Activated CD4-positive, alpha-beta T cell treated with anti-CD3 and anti-CD28 coated beads, Interleukin-2, amount 10 ng/mL, durations not matched to agents 7 days and 5 days (primary cell): ENCODE measurements at regions of chr17 and their contacts with region 1.

Region 1: DNA sequence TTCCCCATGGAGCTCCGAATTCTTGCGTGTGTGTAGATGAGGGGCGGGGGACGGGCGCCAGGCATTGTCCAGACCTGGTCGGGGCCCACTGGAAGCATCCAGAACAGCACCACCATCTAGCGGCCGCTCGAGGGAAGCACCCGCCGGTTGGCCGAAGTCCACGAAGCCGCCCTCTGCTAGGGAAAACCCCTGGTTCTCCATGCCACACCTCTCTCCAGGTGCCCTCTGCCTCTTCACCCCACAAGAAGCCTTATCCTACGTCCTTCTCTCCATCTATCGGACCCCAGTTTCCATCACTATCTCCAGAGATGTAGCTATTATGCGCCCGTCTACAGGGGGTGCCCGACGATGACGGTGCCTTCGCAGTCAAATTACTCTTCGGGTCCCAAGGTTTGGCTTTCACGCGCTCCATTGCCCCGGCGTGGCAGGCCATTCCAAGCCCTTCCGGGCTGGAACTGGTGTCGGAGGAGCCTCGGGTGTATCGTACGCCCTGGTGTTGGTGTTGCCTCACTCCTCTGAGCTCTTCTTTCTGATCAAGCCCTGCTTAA is 617 bp upstream of the SENP3 start:
- DNase-seq: peak; percentile 83
- H3K4me3 Mint-ChIP-seq: peak overlapping the region; percentile 81
- H3K27ac Mint-ChIP-seq: peak overlapping the region; percentile 93
- H3K4me1 Mint-ChIP-seq: peaks cover 60% of the 10 kb centered on the region
- H3K27me3 Mint-ChIP-seq: no peaks in the 10 kb centered on the region

Region 2: GRCh38 chr17:7484919-7485377 is 76.2 kb before region 1 on chr17:
- CTCF ChIA-PET with region 1: interaction called, 10 read pairs
- POLR2A ChIA-PET with region 1: no interaction called
- DNase-seq: no peak
- H3K4me3 Mint-ChIP-seq: peak overlapping the region; percentile 94
- H3K27ac Mint-ChIP-seq: peak overlapping the region; percentile 99
- H3K4me1 Mint-ChIP-seq: peaks cover 72% of the 10 kb centered on the region
- H3K27me3 Mint-ChIP-seq: no peaks in the 10 kb centered on the region

Region 3: GRCh38 chr17:7515911-7516610 is 45.0 kb before region 1 on chr17:
- CTCF ChIA-PET with region 1: interaction called, 38 read pairs
- POLR2A ChIA-PET with region 1: interaction called, 11 read pairs
- DNase-seq: no peak
- H3K4me3 Mint-ChIP-seq: no peak overlapping the region
- H3K27ac Mint-ChIP-seq: no peak overlapping the region
- H3K4me1 Mint-ChIP-seq: peaks cover 4% of the 10 kb centered on the region
- H3K27me3 Mint-ChIP-seq: no peaks in the 10 kb centered on the region

Region 4: GRCh38 chr17:7548585-7549400 is 12.3 kb before region 1 on chr17 and contains the start of gene TNFSF12:
- CTCF ChIA-PET with region 1: interaction called, 38 read pairs
- POLR2A ChIA-PET with region 1: no interaction called
- DNase-seq: peak; percentile 69
- H3K4me3 Mint-ChIP-seq: peak within 1 kb of the TSS; percentile 86
- H3K27ac Mint-ChIP-seq: peak within 1 kb of the TSS; percentile 90
- H3K4me1 Mint-ChIP-seq: peaks cover 55% of the 10 kb centered on the region
- H3K27me3 Mint-ChIP-seq: peaks cover 2% of the 10 kb centered on the region
- total RNA-seq, gene TNFSF12: 79.6 to 82.5 TPM

Region 5: GRCh38 chr17:7583253-7584109 is 22.4 kb after region 1 on chr17 and contains the start of gene MPDU1:
- CTCF ChIA-PET with region 1: interaction called, 14 read pairs
- POLR2A ChIA-PET with region 1: no interaction called
- DNase-seq: peak; percentile 95
- H3K4me3 Mint-ChIP-seq: peak within 1 kb of the TSS; percentile 92
- H3K27ac Mint-ChIP-seq: peak within 1 kb of the TSS; percentile 99
- H3K4me1 Mint-ChIP-seq: peaks cover 63% of the 10 kb centered on the region
- H3K27me3 Mint-ChIP-seq: no peaks in the 10 kb centered on the region
- total RNA-seq, gene MPDU1: 62.3 to 81.7 TPM

Region 6: DNA sequence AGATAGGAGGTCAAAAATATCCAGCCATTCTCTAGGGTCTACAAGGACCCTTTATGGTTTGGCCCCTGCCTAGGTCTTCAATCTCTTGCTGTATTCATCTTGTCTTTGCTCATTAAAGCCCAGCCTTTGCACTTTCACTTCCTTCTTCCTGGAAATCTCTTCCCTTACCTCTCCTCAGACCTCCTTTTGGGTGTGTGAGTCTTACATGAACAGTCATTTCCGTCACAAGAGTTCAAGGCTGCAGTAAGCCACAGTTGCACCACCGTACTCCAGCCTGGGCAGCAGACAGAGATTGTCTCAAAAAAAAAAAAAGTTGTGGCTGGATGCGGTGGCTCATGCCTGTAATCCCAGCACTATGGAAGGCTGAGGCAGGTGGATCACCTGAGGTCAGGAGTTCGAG is 83.7 kb after region 1 on chr17:
- CTCF ChIA-PET with region 1: no interaction called
- POLR2A ChIA-PET with region 1: no interaction called
- DNase-seq: no peak
- H3K4me3 Mint-ChIP-seq: no peak overlapping the region
- H3K27ac Mint-ChIP-seq: peak overlapping the region; percentile 7
- H3K4me1 Mint-ChIP-seq: peaks cover 25% of the 10 kb centered on the region
- H3K27me3 Mint-ChIP-seq: peaks cover 12% of the 10 kb centered on the region